Activated CD8-positive, alpha-beta T cell treated with anti-CD3 and anti-CD28 coated beads for 36 hours (primary cell): ENCODE measurements at regions of chr1 and their contacts with region 1.

Region 1: GRCh38 chr1:32291708-32292492 is at the start of gene HDAC1:
- DNase-seq: peak; percentile 98
- ATAC-seq: peak; percentile 98
- H3K4me3 Mint-ChIP-seq: peak within 1 kb of the TSS; percentile 98
- H3K27ac Mint-ChIP-seq: peak within 1 kb of the TSS; percentile 97
- H3K4me1 Mint-ChIP-seq: peaks cover 41% of the 10 kb centered on the region
- H3K27me3 Mint-ChIP-seq: no peaks in the 10 kb centered on the region
- CTCF ChIP-seq: no peak
- total RNA-seq, gene HDAC1: 126 to 127 TPM

Region 2: DNA sequence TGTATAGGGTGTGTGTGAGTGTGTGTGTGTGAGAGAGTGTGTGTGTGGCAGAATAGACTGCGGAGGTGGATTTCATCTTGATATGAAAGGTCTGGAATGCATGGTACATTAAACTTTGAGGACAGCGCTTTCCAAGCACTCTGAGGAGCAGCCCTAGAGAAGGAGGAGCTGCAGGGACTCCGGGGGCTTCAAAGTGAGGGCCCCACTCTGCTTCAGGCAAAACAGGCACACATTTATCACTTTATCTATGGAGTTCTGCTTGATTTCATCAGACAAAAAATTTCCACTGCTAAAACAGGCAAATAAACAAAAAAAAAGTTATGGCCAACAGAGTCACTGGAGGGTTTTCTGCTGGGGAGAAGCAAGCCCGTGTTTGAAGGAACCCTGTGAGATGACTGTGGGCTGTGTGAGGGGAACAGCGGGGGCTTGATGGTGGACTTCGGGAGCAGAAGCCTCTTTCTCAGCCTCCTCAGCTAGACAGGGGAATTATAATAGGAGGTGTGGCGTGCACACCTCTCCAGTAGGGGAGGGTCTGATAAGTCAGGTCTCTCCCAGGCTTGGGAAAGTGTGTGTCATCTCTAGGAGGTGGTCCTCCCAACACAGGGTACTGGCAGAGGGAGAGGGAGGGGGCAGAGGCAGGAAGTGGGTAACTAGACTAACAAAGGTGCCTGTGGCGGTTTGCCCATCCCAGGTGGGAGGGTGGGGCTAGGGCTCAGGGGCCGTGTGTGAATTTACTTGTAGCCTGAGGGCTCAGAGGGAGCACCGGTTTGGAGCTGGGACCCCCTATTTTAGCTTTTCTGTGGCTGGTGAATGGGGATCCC is 18.3 kb before region 1 on chr1:
- CTCF ChIA-PET with region 1: no interaction called
- POLR2A ChIA-PET with region 1: interaction called, 10 read pairs
- intact Hi-C with region 1: no loop called
- DNase-seq: peak; percentile 95
- ATAC-seq: peak; percentile 93
- H3K4me3 Mint-ChIP-seq: peak overlapping the region; percentile 68
- H3K27ac Mint-ChIP-seq: peak overlapping the region; percentile 89
- H3K4me1 Mint-ChIP-seq: peaks cover 58% of the 10 kb centered on the region
- H3K27me3 Mint-ChIP-seq: no peaks in the 10 kb centered on the region
- CTCF ChIP-seq: no peak

Region 3: DNA sequence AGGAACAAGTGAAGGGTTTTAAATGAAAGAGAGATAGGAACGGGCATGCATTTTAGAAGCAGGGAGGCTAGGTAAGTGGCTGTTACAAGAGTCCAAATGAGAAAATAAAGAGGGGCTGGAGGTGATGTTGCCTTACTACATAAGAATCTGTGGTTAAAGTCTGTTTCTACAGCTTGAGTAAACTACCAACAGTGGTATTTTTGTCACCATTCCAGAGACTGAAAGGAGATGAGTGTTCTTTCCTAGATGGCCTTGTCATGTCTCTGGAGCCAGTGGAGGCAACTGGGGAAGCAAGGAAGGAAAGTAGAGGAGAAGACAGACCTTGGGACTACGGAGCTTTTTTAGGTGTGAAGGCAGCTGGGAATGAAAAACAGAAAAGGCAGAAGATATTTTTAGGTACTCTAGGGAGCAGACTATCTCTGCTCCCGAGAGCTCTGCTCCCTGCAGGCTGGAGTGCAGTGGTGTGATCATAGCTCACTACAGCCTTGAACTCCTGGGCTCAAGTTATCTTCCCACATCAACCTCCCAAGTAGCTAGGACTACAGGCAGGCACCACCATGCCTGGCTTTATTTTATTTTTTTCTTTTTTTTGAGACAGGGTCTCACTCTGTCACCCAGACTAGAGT is 12.2 kb after region 1 on chr1:
- CTCF ChIA-PET with region 1: interaction called, 4 read pairs
- POLR2A ChIA-PET with region 1: interaction called, 15 read pairs
- intact Hi-C with region 1: no loop called
- DNase-seq: no peak
- ATAC-seq: no peak
- H3K4me3 Mint-ChIP-seq: no peak overlapping the region
- H3K27ac Mint-ChIP-seq: peak overlapping the region; percentile 66
- H3K4me1 Mint-ChIP-seq: peaks cover 55% of the 10 kb centered on the region
- H3K27me3 Mint-ChIP-seq: no peaks in the 10 kb centered on the region
- CTCF ChIP-seq: no peak

Region 4: GRCh38 chr1:32350785-32351398 is 59.0 kb after region 1 on chr1:
- CTCF ChIA-PET with region 1: no interaction called
- POLR2A ChIA-PET with region 1: no interaction called
- intact Hi-C with region 1: no loop called
- DNase-seq: peak; percentile 83
- ATAC-seq: peak; percentile 85
- H3K4me3 Mint-ChIP-seq: peak overlapping the region; percentile 79
- H3K27ac Mint-ChIP-seq: peak overlapping the region; percentile 85
- H3K4me1 Mint-ChIP-seq: peaks cover 45% of the 10 kb centered on the region
- H3K27me3 Mint-ChIP-seq: no peaks in the 10 kb centered on the region
- CTCF ChIP-seq: peak; percentile 75

Region 5: DNA sequence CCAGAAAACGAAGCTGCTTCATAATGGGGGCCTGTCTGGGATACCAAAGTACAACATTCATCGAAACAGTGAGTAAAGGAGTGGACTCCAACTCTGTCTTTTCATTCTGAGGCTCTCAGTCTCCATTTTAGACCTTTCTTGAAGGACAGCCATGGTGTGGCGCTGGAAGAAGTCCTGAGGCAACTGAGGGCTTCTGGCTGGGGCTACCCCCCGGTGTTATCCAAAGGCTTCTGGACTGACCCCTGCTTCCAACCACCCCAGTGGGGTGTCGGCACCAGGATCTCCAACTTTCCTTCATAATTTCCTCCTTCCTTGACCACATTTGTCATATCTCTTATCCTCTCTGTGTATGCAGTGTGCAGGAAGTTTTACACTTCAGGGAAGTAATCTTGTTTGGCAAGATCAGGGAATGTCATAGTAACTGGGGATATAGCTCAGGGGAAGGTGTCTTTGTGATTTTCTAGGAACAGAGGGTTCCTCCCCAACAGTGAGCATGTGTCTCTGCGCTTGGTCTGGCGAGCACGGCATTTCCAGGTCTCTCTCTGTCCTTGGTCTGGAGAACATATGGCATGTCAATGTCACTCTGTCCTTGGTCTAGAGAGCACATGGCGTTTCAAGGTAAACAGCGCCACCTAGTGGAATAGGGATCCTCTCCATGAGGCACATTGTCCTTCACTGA is 121.7 kb after region 1 on chr1:
- CTCF ChIA-PET with region 1: no interaction called
- POLR2A ChIA-PET with region 1: no interaction called
- intact Hi-C with region 1: no loop called
- DNase-seq: peak; percentile 85
- ATAC-seq: peak; percentile 79
- H3K4me3 Mint-ChIP-seq: no peak overlapping the region
- H3K27ac Mint-ChIP-seq: no peak overlapping the region
- H3K4me1 Mint-ChIP-seq: peaks cover 3% of the 10 kb centered on the region
- H3K27me3 Mint-ChIP-seq: peaks cover 4% of the 10 kb centered on the region
- CTCF ChIP-seq: peak; percentile 87